H1 (cell line): ENCODE measurements at regions of chr6 and their contacts with region 1.

Region 1: GRCh38 chr6:34027445-34027936 is 118.4 kb downstream of the GRM4 start:
- DNase-seq: peak; percentile 29 to 97
- H3K4me3 ChIP-seq: no peak overlapping the region
- H3K27ac ChIP-seq: no peak overlapping the region
- H3K4me1 ChIP-seq: peaks cover 0 to 2% (median 0%) of the 10 kb centered on the region in 4 experiments; a peak in 1 of 7 replicates
- H3K27me3 ChIP-seq: no peaks in the 10 kb centered on the region
- CTCF ChIP-seq: peak in 2 of 3 experiments; percentile 86 to 98; a peak in 3 of 4 replicates
- EP300 ChIP-seq: no peak
- POLR2A ChIP-seq: no peak
- RAD21 ChIP-seq: peak; percentile 89 to 93

Region 2: DNA sequence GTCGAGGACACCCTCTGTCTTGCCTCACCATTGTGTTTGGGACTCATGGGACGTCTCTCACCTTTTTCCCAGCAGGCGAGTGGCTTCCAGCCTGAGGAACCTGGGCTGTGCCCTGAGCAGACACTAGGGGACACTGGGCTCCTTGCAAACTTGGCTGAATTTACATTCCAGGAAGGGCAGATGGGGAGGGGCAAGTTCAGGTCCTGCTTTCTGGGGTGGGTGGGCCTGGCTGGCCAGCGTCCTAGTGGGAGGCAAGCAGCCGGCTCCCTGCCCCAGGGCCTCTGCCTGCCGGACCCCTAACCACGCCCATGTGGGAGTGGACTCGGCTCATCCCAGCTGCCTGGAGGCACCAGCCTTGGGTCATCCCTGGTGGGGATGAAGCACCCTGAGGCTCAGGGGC is 175.5 kb before region 1 on chr6:
- CTCF ChIA-PET with region 1: interaction called, 46 read pairs
- POLR2A ChIA-PET with region 1: no interaction called
- DNase-seq: peak; percentile 66 to 71
- H3K4me3 ChIP-seq: no peak overlapping the region
- H3K27ac ChIP-seq: no peak overlapping the region
- H3K4me1 ChIP-seq: peaks cover 0 to 5% (median 2%) of the 10 kb centered on the region in 4 experiments; a peak in 4 of 7 replicates
- H3K27me3 ChIP-seq: no peaks in the 10 kb centered on the region
- CTCF ChIP-seq: peak in 2 of 3 experiments; percentile 84 to 93; a peak in 3 of 4 replicates
- EP300 ChIP-seq: no peak
- POLR2A ChIP-seq: no peak
- RAD21 ChIP-seq: peak; percentile 88 to 96

Region 3: DNA sequence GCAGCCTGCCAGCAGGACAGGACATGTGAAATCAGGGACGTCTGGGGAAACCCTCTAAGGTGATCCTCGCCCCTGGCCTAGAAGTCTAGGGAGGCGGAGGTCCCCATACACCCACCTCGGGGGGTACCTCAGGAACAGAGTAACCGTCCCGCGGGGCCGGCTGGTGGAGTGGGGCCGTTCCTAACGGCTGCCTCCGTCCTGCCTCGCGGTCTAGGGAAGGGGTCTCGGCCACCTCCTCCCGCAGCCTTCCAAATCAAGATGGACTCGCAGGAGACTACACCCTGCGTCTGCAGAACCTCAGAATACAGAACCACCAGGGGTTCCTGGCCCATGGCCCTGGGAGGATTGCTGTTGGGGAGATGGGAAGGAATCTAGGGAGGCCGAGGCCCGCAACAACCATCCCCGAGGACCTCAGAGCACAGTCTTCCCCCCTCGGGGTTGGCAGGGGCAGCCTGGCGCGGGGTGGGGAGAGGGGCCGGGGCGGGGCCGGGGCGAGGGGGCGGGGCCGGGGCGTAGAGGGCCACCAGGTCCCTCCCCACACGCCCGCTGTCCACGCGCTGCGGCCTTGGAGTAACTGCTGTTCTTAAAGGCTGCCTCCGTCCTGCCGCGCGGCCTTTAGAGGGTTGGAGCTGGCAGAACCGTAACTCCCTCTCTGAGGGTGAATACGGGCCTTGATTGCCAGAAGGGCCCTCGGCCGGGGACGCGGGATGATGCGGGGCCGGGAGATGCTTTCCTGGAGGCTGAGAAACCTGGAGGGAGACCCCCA is 134.7 kb before region 1 on chr6:
- CTCF ChIA-PET with region 1: no interaction called
- POLR2A ChIA-PET with region 1: no interaction called
- DNase-seq: no peak
- H3K4me3 ChIP-seq: no peak overlapping the region
- H3K27ac ChIP-seq: no peak overlapping the region
- H3K4me1 ChIP-seq: no peaks in the 10 kb centered on the region
- H3K27me3 ChIP-seq: 0 out of 7 replicates have a peak, but pooled peaks cover 0 to 3% (median 0%) of the 10 kb centered on the region in 4 experiments
- CTCF ChIP-seq: no peak
- EP300 ChIP-seq: no peak
- POLR2A ChIP-seq: no peak
- RAD21 ChIP-seq: no peak

Region 4: GRCh38 chr6:33983105-33983716 is 44.3 kb before region 1 on chr6:
- CTCF ChIA-PET with region 1: interaction called, 47 read pairs
- POLR2A ChIA-PET with region 1: no interaction called
- DNase-seq: peak in 1 of 2 experiments; percentile 42
- H3K4me3 ChIP-seq: no peak overlapping the region
- H3K27ac ChIP-seq: no peak overlapping the region
- H3K4me1 ChIP-seq: peaks cover 0 to 9% (median 4%) of the 10 kb centered on the region in 4 experiments; a peak in 2 of 7 replicates
- H3K27me3 ChIP-seq: peaks cover 0 to 2% (median 0%) of the 10 kb centered on the region in 4 experiments; a peak in 1 of 7 replicates
- CTCF ChIP-seq: peak in 1 of 3 experiments; percentile 10; a peak in 2 of 4 replicates
- EP300 ChIP-seq: no peak
- POLR2A ChIP-seq: no peak
- RAD21 ChIP-seq: peak; percentile 7 to 29; a peak in 2 of 4 replicates

Region 5: GRCh38 chr6:34001706-34002621 is 25.5 kb before region 1 on chr6:
- CTCF ChIA-PET with region 1: interaction called, 10 read pairs
- POLR2A ChIA-PET with region 1: interaction called, 3 read pairs
- DNase-seq: no peak
- H3K4me3 ChIP-seq: no peak overlapping the region
- H3K27ac ChIP-seq: no peak overlapping the region
- H3K4me1 ChIP-seq: peaks cover 6 to 9% (median 8%) of the 10 kb centered on the region in 4 experiments
- H3K27me3 ChIP-seq: peaks cover 14 to 45% (median 40%) of the 10 kb centered on the region in 4 experiments
- CTCF ChIP-seq: no peak
- EP300 ChIP-seq: no peak
- POLR2A ChIP-seq: no peak
- RAD21 ChIP-seq: no peak

Region 6: GRCh38 chr6:34055223-34055933 is 27.9 kb after region 1 on chr6:
- CTCF ChIA-PET with region 1: interaction called, 15 read pairs
- POLR2A ChIA-PET with region 1: interaction called, 4 read pairs
- DNase-seq: peak; percentile 60 to 87
- H3K4me3 ChIP-seq: no peak overlapping the region
- H3K27ac ChIP-seq: no peak overlapping the region
- H3K4me1 ChIP-seq: peaks cover 6 to 18% (median 11%) of the 10 kb centered on the region in 4 experiments
- H3K27me3 ChIP-seq: peaks cover 0 to 2% (median 0%) of the 10 kb centered on the region in 4 experiments; a peak in 1 of 7 replicates
- CTCF ChIP-seq: peak in 2 of 3 experiments; percentile 80 to 87; a peak in 3 of 4 replicates
- EP300 ChIP-seq: no peak
- POLR2A ChIP-seq: no peak
- RAD21 ChIP-seq: peak; percentile 68 to 75

Region 7: GRCh38 chr6:34196126-34196830 is 168.8 kb after region 1 on chr6:
- CTCF ChIA-PET with region 1: no interaction called
- POLR2A ChIA-PET with region 1: no interaction called
- DNase-seq: peak in 1 of 2 experiments; percentile 91
- H3K4me3 ChIP-seq: peak overlapping the region in 2 of 4 experiments; percentile 23 to 34; a peak in 4 of 8 replicates
- H3K27ac ChIP-seq: no peak overlapping the region
- H3K4me1 ChIP-seq: peaks cover 0 to 12% (median 5%) of the 10 kb centered on the region in 4 experiments; a peak in 5 of 7 replicates
- H3K27me3 ChIP-seq: peaks cover 0 to 13% (median 4%) of the 10 kb centered on the region in 4 experiments; a peak in 4 of 7 replicates
- CTCF ChIP-seq: peak; percentile 78 to 85 (median 79)
- EP300 ChIP-seq: peak in 1 of 2 experiments; percentile 28; a peak in 1 of 3 replicates
- POLR2A ChIP-seq: no peak
- RAD21 ChIP-seq: peak; percentile 74 to 76

Region 8: GRCh38 chr6:34260576-34261267 is 233.2 kb after region 1 on chr6:
- CTCF ChIA-PET with region 1: no interaction called
- POLR2A ChIA-PET with region 1: no interaction called
- DNase-seq: no peak
- H3K4me3 ChIP-seq: no peak overlapping the region
- H3K27ac ChIP-seq: no peak overlapping the region
- H3K4me1 ChIP-seq: no peaks in the 10 kb centered on the region
- H3K27me3 ChIP-seq: no peaks in the 10 kb centered on the region
- CTCF ChIP-seq: no peak
- EP300 ChIP-seq: no peak
- POLR2A ChIP-seq: no peak
- RAD21 ChIP-seq: no peak